ENCODE measurements at regions of chr11 and their contacts with region 1.

Region 1: DNA sequence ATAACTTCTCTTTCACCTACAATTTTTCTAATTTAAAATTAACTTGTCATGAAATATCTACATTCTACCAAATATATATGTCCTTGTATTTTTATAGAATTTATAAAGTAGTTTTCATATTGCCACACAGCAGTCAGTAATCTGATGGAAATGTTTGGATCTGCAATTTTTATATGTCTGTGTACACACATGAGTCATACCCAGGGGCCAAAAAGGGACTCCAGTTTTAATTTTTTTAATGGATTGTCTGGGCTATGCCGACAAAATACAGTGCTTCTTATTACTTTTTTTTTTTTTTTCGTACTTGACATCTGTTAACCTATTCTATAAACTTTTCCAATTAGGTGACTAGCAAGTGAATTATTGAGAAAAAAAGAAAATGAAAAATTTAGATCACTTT is 6.3 kb downstream of the GUCY1A2 start:
- DNase-seq: no peak
- ATAC-seq: no peak
- H3K4me3 ChIP-seq: no peak overlapping the region
- H3K27ac ChIP-seq: no peak overlapping the region
- H3K4me1 ChIP-seq: no peaks in the 10 kb centered on the region
- H3K27me3 ChIP-seq: peaks cover 0 to 19% (median 0%) of the 10 kb centered on the region in 3 donors
- CTCF ChIP-seq: no peak

Region 2: DNA sequence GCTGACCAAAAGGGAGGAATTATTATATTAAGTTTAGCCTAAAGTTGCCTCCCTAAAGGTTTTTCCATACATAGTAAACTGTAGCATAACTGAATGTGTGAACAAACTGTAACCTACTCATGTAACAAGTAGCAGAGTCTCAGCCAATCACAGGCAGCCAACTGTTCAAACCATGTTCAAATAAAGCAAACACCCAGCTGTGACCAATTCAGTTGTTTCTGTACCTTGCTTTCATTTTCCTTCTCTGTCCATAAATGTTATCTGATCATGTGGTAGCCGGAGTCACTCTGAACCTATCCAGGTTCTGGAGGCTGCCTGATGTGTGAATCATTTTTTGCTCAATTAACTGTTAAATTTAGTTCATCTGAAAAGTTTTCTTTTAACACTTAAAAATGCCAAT is 367.2 kb before region 1 on chr11:
- intact Hi-C with region 1: no loop called
- DNase-seq: no peak
- ATAC-seq: no peak
- H3K4me3 ChIP-seq: no peak overlapping the region
- H3K27ac ChIP-seq: no peak overlapping the region
- H3K4me1 ChIP-seq: no peaks in the 10 kb centered on the region
- H3K27me3 ChIP-seq: no peaks in the 10 kb centered on the region
- CTCF ChIP-seq: no peak

Region 3: DNA sequence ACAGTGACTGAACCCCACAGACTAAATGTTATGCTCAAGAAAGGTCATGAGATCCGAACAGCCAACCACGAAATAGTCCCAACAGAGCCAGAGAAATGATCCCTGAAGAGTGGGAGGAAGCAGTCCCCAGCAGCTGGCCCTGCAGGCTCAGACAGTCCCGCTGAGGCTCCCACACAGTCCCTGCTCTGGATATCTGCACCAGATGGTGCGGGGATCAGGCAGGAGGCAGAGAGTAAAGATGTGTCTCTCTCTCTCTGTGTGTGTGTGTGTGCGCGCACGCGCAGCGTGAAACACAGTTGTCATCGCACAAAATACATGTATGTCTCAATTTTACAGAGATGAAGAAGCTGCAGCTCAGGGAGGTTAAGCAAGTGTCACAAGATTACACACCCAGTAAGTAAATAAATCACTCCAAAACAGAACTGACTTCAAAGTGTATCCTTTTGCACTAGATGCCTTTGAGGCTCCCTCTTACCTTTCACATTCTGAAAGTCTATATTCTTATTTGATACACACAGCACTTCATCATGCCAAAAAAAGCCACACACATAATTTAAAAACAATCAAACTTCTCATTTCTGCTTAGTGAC is 21.6 kb before region 1 on chr11:
- intact Hi-C with region 1: loop called in 1 of 2 experiments (anchors 1 kb)
- DNase-seq: peak in 1 of 2 donors; percentile 51
- ATAC-seq: peak in 1 of 4 donors; percentile 19
- H3K4me3 ChIP-seq: no peak overlapping the region
- H3K27ac ChIP-seq: no peak overlapping the region
- H3K4me1 ChIP-seq: no peaks in the 10 kb centered on the region
- H3K27me3 ChIP-seq: no peaks in the 10 kb centered on the region
- CTCF ChIP-seq: no peak